Right ventricle myocardium inferior (tissue), 1 donor: ENCODE measurements at regions of chr16 and their contacts with region 1.

Region 1: DNA sequence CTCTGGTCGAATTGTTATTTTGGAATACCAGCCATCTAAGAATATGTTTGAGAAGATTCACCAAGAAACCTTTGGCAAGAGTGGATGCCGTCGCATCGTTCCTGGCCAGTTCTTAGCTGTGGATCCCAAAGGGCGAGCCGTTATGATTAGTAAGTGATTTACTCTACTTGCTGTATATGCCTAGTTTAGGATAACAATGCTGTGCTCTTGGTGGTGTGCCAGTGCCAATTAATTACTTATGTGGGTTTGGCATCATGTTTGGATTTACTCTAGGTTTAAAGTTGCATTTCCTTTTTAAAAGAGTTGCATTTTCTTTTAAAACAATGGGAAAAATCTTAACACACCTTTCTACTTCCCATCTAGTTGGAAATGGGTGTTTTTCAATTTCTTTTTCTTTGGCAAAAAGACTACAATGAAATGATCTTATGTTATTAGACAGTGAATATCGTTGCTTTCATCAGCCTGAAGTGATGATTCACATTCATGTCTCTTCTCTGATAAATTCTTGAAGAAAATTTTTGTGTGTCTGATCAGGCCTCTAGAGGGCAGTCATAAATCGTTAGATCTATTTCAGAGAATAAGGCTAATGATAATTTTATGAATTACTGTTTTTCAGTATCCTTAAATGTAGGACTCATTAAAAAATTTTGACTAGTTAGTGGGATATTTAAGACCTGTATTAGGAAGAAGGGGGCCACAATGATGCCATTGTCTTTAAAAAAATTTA is 5.6 kb downstream of the SF3B3 start:
- DNase-seq: no peak
- ATAC-seq: no peak

Region 2: GRCh38 chr16:70508752-70509151 is 20.5 kb before region 1 on chr16:
- intact Hi-C with region 1: loop called (anchors 2 kb)
- DNase-seq: no peak
- ATAC-seq: no peak

Region 3: GRCh38 chr16:70561623-70562022 is 32.4 kb after region 1 on chr16:
- intact Hi-C with region 1: loop called (anchors 5 kb)
- DNase-seq: no peak
- ATAC-seq: no peak